ENCODE measurements at regions of chr16 and their contacts with region 1.

Region 1: DNA sequence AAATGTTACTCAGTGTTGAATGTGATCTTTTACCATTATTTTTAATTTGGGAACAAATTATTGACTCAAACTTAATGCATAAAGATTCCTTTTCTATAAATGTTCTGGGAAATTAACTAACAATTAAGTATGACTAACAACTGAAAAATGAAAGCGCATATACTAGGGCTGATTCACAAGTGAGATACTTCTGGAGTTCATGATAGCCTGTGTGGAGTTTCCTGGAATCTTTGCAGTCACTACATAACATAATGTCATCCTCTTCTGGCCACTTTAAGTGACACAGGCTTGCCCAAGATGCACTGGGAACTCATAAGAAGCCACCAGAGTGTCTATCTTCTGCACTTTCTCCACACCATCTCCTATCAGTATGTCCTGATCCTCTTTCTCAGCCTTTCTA is 450.3 kb upstream of the CDH11 start:
- DNase-seq: peak; percentile 88
- ATAC-seq: peak; percentile 98
- H3K4me3 ChIP-seq: no peak overlapping the region
- H3K27ac ChIP-seq: peak overlapping the region; percentile 80; the same call in 1 of the 2 replicates
- H3K4me1 ChIP-seq: peaks cover 3% of the 10 kb centered on the region; the same call in 1 of the 2 replicates
- H3K27me3 ChIP-seq: no peaks in the 10 kb centered on the region
- CTCF ChIP-seq: 0 out of 2 replicates have a peak, but pooled peaks have one; percentile 20
- POLR2A ChIP-seq: no peak
- RAD21 ChIP-seq: peak; percentile 37; the same call in 1 of the 2 replicates

Region 2: DNA sequence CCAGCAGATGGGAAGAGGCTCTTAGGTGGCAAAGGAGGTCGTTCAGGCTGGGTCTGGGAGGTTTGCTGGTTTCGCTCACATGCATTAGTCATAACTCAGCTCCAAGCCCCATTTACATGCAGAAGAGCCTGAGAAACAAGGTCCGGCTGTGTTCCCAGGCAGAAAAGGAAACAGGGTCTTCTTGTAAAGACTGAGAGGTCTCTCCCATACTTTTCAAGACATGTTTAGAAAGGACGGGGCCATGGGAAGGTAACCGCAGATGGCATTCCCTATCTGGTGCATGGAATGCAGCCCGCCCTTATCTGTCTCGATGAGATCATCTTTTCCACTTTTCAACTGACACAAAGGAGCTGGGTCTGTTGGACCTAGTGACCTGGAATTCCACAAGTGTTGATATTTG is 61.3 kb before region 1 on chr16:
- CTCF ChIA-PET with region 1: no interaction called
- POLR2A ChIA-PET with region 1: no interaction called
- dilution Hi-C with region 1: no loop called
- in situ Hi-C with region 1: no loop called
- intact Hi-C with region 1: loop called (anchors 10 kb)
- DNase-seq: peak; percentile 64
- ATAC-seq: no peak
- H3K4me3 ChIP-seq: no peak overlapping the region
- H3K27ac ChIP-seq: no peak overlapping the region
- H3K4me1 ChIP-seq: peaks cover 4% of the 10 kb centered on the region
- H3K27me3 ChIP-seq: peaks cover 3% of the 10 kb centered on the region
- CTCF ChIP-seq: no peak
- POLR2A ChIP-seq: no peak
- RAD21 ChIP-seq: no peak

Measured in IMR-90 (cell line).